Psoas muscle (tissue), 8 donors: ENCODE measurements at regions of chr18 and their contacts with region 1.

Region 1: GRCh38 chr18:46772357-46772756 is 15.5 kb upstream of the ST8SIA5 start:
- DNase-seq: no peak
- ATAC-seq: no peak
- H3K4me3 ChIP-seq: no peak overlapping the region
- H3K27ac ChIP-seq: peak overlapping the region; percentile 48
- H3K4me1 ChIP-seq: peaks cover 29% of the 10 kb centered on the region
- H3K27me3 ChIP-seq: no peaks in the 10 kb centered on the region
- CTCF ChIP-seq: no peak

Region 2: DNA sequence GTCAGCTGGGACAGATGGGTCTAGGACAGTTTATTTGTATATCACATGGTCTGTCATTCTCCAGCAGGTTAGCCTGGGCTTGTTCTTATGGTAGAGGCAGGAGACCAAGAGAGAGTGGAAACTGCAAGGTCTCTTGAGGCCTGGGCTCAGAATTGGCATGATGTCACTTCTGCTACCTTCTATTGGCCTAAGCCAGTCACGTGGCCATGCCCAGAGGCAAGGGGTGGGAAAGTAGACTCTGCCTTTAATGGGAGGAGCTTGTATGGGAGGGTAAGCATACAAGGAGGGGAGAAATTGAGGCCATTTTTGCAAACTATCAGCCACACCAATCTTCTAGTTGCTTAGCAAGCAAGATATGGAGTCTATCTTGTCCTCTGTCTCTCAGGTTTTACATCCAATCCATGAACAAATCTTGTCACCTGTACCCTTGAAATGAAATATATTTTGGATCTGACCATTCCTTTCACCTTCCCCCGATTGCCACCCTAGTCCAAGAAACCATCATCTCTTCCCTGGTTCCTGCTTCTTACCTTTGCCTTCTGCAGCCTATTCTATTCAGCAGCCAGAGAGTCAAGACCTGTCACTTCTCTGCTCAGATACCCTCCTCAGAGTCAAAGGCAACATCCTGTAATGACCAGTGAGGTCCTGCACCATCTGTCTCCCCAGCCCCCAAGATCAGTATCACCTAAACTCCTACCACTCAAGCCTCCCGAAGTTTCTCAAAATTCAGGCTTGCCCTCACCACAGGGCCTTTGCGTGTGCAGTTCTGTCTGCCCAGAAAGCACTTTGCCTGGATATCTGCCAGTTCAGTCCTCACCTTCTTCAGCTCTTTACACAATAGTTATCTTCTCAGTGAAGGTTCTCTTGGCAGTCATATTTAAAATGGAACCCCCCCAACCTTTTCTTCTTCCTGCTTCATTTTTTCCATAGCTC is 355.4 kb before region 1 on chr18:
- intact Hi-C with region 1: no loop called
- DNase-seq: no peak
- ATAC-seq: no peak
- H3K4me3 ChIP-seq: no peak overlapping the region
- H3K27ac ChIP-seq: no peak overlapping the region
- H3K4me1 ChIP-seq: peaks cover 71% of the 10 kb centered on the region
- H3K27me3 ChIP-seq: no peaks in the 10 kb centered on the region
- CTCF ChIP-seq: no peak

Region 3: GRCh38 chr18:46815661-46816060 is 43.3 kb after region 1 on chr18:
- intact Hi-C with region 1: loop called in 1 of 2 experiments (anchors 5 kb)
- DNase-seq: no peak
- ATAC-seq: no peak
- H3K4me3 ChIP-seq: no peak overlapping the region
- H3K27ac ChIP-seq: no peak overlapping the region
- H3K4me1 ChIP-seq: peaks cover 11% of the 10 kb centered on the region
- H3K27me3 ChIP-seq: no peaks in the 10 kb centered on the region
- CTCF ChIP-seq: no peak